ENCODE measurements at regions of chr10 and their contacts with region 1.

Region 1: DNA sequence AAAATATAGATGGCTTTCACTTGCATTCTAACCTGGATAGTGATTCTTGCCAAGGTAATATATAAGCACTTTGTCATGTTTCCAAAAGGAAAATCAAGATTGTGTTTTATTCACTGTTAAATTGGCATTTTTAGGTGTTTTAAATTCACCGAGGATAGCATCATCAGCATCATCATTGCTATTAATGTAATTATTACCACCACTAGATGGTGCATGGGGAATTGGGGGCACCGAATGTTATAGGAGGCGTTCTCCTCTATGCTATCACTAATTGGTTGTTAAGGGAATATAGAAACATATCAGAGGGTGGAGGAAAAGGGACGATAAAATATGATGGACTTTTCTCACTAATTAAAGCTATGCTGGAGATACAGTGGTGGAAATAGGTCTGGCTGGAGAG is 95.5 kb downstream of the CELF2 start:
- DNase-seq: peak; percentile 40
- CTCF ChIP-seq: peak; percentile 35

Region 2: DNA sequence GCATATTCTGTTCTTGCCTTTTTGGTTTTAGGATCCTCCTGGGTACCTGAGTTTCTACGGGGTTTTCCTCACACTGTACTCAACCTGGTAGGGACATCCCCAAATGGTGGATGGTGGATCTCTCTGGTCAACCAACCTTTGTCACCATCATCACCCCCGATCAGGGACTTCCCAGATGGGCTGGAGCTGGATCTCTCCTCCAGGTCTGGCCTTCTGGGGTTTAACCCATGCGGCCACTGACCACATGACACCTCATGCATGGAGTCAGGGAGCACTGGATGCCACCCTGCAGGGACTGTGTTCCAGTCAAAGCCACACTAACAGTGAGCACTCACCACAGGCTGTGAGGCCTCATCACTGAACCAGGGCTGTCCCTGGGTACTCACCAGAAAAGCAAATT is 15.5 kb before region 1 on chr10:
- CTCF ChIA-PET with region 1: interaction called, 11 read pairs
- POLR2A ChIA-PET with region 1: no interaction called
- DNase-seq: peak; percentile 18
- CTCF ChIP-seq: no peak

Region 3: GRCh38 chr10:11125004-11125403 is 11.8 kb after region 1 on chr10:
- CTCF ChIA-PET with region 1: interaction called, 22 read pairs
- POLR2A ChIA-PET with region 1: no interaction called
- DNase-seq: no peak
- CTCF ChIP-seq: no peak

Region 4: GRCh38 chr10:11138314-11139033 is 25.3 kb after region 1 on chr10:
- CTCF ChIA-PET with region 1: no interaction called
- POLR2A ChIA-PET with region 1: no interaction called
- DNase-seq: no peak
- CTCF ChIP-seq: no peak

Region 5: GRCh38 chr10:11173042-11173441 is 59.9 kb after region 1 on chr10:
- CTCF ChIA-PET with region 1: interaction called, 10 read pairs
- POLR2A ChIA-PET with region 1: no interaction called
- DNase-seq: no peak
- CTCF ChIP-seq: no peak

Measured in GM10248 (cell line).